Naive thymus-derived CD4-positive, alpha-beta T cell (primary cell): ENCODE measurements at regions of chr11 and their contacts with region 1.

Region 1: DNA sequence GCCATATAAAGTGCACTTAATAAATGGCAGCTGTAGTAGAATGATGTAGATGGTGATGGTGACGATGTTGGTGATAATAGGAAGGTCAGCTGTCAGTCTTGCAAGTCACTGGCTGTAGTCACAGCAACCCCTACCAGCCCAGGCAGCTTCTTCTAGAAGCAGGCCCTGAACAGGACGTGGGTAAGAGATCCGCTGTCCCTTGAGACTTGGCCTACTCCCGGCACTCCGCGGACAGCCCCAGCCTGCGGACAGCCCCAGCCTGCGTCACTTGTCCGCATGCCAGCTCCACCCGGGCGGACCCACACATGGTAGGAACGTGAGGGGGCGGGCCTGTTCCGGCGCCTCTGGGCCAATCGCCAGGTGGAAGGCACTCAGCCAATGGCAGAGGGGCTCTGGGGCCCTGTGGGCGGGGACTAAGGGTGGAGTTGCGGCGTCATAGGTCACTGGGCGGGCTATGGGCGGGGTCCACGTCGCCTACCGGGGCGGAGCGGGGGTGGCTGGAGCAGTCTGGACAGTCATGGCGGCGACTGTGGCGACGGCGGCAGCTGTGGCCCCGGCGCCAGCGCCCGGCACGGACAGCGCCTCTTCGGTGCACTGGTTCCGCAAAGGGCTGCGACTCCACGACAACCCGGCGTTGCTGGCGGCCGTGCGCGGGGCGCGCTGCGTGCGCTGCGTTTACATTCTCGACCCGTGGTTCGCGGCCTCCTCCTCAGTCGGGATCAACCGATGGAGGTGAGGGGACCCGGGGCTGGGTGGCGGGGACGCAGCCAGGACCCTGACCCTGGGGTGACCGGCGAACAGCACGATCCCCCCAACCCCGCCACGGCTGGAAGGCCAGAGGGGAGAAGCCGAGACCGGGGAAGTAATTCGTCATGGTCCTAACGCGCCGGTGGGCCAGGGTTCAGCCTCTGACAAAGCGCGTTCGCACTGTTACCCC is at the start of gene CRY2:
- DNase-seq: peak; percentile 94 to 98 (median 97)
- ATAC-seq: peak; percentile 90
- H3K4me3 ChIP-seq: peak within 1 kb of the TSS; percentile 85
- H3K4me3 Mint-ChIP-seq: peak within 1 kb of the TSS; percentile 78 to 96 (median 90)
- H3K27ac ChIP-seq: peak within 1 kb of the TSS; percentile 91
- H3K27ac Mint-ChIP-seq: peak within 1 kb of the TSS; percentile 89 to 99 (median 96)
- H3K4me1 ChIP-seq: peaks cover 21 to 34% of the 10 kb centered on the region in 2 donors
- H3K4me1 Mint-ChIP-seq: peaks cover 40 to 68% (median 54%) of the 10 kb centered on the region in 7 donors
- H3K27me3 ChIP-seq: no peaks in the 10 kb centered on the region
- H3K27me3 Mint-ChIP-seq: peaks cover 0 to 20% (median 0%) of the 10 kb centered on the region in 5 donors
- total RNA-seq, gene CRY2: 31.1 to 202 (median 66.9) TPM

Region 2: DNA sequence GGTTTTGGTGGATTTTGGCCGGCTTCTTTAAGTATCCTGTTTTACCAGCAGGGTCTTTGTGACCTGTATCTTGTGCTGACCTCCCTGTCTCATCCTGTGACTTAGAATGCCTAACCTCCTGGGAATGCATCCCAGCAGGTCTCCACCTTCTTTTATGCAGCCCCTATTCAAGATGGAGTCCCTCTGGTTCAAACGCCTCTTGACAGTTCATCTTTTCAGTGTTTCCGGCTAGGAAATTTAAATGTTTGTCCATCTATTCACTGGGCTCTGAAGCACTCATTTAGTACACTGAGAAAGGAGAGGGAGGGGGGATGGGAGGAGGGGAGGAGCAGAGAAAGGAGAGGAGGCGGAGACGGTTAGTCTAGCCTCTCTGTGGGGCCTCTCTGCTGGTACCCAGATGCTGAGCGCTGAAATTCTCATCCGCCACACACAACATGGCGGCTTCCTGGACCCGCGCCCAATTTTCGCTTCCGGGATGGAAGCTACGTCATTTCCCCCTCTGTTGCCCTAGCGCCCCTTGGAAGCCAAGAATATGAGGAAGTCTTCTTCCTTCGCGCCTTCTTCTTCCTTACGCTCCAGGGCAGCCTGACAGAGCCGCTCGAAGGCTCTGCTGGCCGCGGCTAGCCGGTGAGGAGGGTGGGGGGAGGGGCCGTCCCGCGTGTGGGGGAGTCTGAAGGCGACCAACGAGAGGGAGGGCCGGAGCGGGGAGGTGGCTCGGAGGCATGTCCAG is 492.1 kb before region 1 on chr11:
- CTCF ChIA-PET with region 1: no interaction called
- POLR2A ChIA-PET with region 1: no interaction called
- intact Hi-C with region 1: loop called in 1 of 2 experiments (anchors 10 kb)
- DNase-seq: peak; percentile 77 to 91 (median 88)
- ATAC-seq: peak; percentile 96
- H3K4me3 ChIP-seq: peak overlapping the region; percentile 93
- H3K4me3 Mint-ChIP-seq: peak overlapping the region; percentile 75 to 87 (median 82)
- H3K27ac ChIP-seq: peak overlapping the region; percentile 73
- H3K27ac Mint-ChIP-seq: peak overlapping the region; percentile 70 to 91 (median 83)
- H3K4me1 ChIP-seq: peaks cover 0 to 5% of the 10 kb centered on the region in 2 donors
- H3K4me1 Mint-ChIP-seq: peaks cover 9 to 31% (median 26%) of the 10 kb centered on the region in 7 donors
- H3K27me3 ChIP-seq: no peaks in the 10 kb centered on the region
- H3K27me3 Mint-ChIP-seq: peaks cover 0 to 28% (median 7%) of the 10 kb centered on the region in 5 donors

Region 3: DNA sequence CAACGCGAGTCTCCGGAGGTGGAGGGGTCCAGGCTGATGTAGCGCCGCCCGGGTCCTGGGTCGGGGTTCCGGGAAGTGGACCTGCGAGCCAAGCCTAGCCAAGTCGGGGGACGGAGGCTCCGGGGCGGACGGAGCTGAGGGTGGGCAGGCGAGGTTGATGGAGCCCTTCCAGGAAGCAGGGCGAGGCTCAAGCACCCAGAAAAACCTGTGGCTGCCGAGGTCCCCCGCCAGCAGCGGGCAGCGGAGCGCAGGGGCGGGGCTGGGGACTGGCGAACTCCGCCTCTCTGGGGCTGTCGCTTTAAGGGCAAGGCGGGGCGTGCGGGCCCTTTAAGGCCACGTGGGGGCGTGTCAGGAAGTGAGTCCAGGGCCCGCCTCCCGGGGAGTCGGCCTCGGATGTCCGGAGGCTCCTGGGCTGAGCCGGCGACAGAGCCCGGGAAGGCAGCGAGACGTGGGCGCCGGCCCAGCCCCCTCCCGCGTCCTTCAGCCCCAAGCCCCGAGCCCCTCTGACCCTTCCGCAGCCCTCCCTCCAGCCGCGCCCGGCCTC is 42.4 kb before region 1 on chr11 and contains the start of gene SLC35C1:
- CTCF ChIA-PET with region 1: interaction called, 7 read pairs
- POLR2A ChIA-PET with region 1: interaction called, 6 read pairs
- intact Hi-C with region 1: loop called (anchors 1 kb)
- DNase-seq: peak; percentile 89 to 97 (median 93)
- ATAC-seq: peak; percentile 99
- H3K4me3 ChIP-seq: peak within 1 kb of the TSS; percentile 95
- H3K4me3 Mint-ChIP-seq: peak within 1 kb of the TSS; percentile 86 to 99 (median 92)
- H3K27ac ChIP-seq: peak within 1 kb of the TSS; percentile 87
- H3K27ac Mint-ChIP-seq: peak within 1 kb of the TSS; percentile 61 to 94 (median 91)
- H3K4me1 ChIP-seq: peaks cover 27 to 29% of the 10 kb centered on the region in 2 donors
- H3K4me1 Mint-ChIP-seq: peaks cover 31 to 43% (median 40%) of the 10 kb centered on the region in 7 donors
- H3K27me3 ChIP-seq: no peaks in the 10 kb centered on the region
- H3K27me3 Mint-ChIP-seq: no peaks in the 10 kb centered on the region
- total RNA-seq, gene SLC35C1: 7.9 to 22.8 (median 14.2) TPM

Region 4: GRCh38 chr11:45885274-45885920 is 38.2 kb after region 1 on chr11 and contains the start of gene MAPK8IP1:
- CTCF ChIA-PET with region 1: no interaction called
- POLR2A ChIA-PET with region 1: no interaction called
- intact Hi-C with region 1: loop called (anchors 1 kb)
- DNase-seq: peak; percentile 15 to 71 (median 50)
- ATAC-seq: peak; percentile 90
- H3K4me3 ChIP-seq: peak within 1 kb of the TSS; percentile 51
- H3K4me3 Mint-ChIP-seq: peak within 1 kb of the TSS; percentile 64 to 85 (median 73)
- H3K27ac ChIP-seq: no peak within 1 kb of the TSS
- H3K27ac Mint-ChIP-seq: peak within 1 kb of the TSS in 2 of 9 donors; percentile 40 to 69
- H3K4me1 ChIP-seq: no peaks in the 10 kb centered on the region
- H3K4me1 Mint-ChIP-seq: peaks cover 7 to 15% (median 10%) of the 10 kb centered on the region in 7 donors
- H3K27me3 ChIP-seq: no peaks in the 10 kb centered on the region
- H3K27me3 Mint-ChIP-seq: peaks cover 0 to 21% (median 4%) of the 10 kb centered on the region in 5 donors
- total RNA-seq, gene MAPK8IP1: 0.65 to 7.0 (median 0.92) TPM

Region 5: DNA sequence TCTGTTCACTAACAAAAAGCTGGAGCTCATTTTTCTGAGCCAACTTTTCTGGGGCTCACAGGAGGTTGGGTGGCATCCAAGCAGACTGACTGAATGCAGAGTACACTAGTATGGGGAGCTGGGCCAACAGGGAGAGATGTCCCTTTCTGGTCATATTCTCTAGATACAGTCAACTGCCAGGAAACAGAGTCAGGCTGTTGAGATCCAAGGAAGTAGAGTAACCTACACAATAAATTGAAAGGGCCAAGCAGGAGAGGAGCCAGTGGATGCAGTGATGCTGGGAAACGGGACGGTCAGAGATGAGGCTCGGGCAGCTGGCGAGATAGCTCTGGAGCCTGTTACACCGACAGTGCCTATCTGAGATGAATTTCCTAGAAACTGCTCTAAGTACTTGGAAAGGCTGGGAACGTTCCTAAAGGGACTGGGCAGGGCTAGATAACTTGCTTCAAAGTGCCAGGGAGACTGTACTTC is 146.3 kb after region 1 on chr11:
- CTCF ChIA-PET with region 1: no interaction called
- POLR2A ChIA-PET with region 1: no interaction called
- intact Hi-C with region 1: no loop called
- DNase-seq: no peak
- ATAC-seq: no peak
- H3K4me3 ChIP-seq: no peak overlapping the region
- H3K4me3 Mint-ChIP-seq: no peak overlapping the region
- H3K27ac ChIP-seq: no peak overlapping the region
- H3K27ac Mint-ChIP-seq: no peak overlapping the region
- H3K4me1 ChIP-seq: no peaks in the 10 kb centered on the region
- H3K4me1 Mint-ChIP-seq: peaks cover 2 to 20% (median 8%) of the 10 kb centered on the region in 7 donors
- H3K27me3 ChIP-seq: no peaks in the 10 kb centered on the region
- H3K27me3 Mint-ChIP-seq: no peaks in the 10 kb centered on the region

Region 6: GRCh38 chr11:46006418-46007070 is 159.3 kb after region 1 on chr11:
- CTCF ChIA-PET with region 1: interaction called, 20 read pairs
- POLR2A ChIA-PET with region 1: interaction called, 3 read pairs
- intact Hi-C with region 1: loop called (anchors 1 kb)
- DNase-seq: peak in 7 of 9 donors; percentile 18 to 65 (median 53)
- ATAC-seq: peak; percentile 86
- H3K4me3 ChIP-seq: no peak overlapping the region
- H3K4me3 Mint-ChIP-seq: no peak overlapping the region
- H3K27ac ChIP-seq: no peak overlapping the region
- H3K27ac Mint-ChIP-seq: peak overlapping the region in 2 of 9 donors; percentile 2 to 41
- H3K4me1 ChIP-seq: no peaks in the 10 kb centered on the region
- H3K4me1 Mint-ChIP-seq: peaks cover under 1 to 8% (median 4%) of the 10 kb centered on the region in 7 donors
- H3K27me3 ChIP-seq: no peaks in the 10 kb centered on the region
- H3K27me3 Mint-ChIP-seq: no peaks in the 10 kb centered on the region

Region 7: DNA sequence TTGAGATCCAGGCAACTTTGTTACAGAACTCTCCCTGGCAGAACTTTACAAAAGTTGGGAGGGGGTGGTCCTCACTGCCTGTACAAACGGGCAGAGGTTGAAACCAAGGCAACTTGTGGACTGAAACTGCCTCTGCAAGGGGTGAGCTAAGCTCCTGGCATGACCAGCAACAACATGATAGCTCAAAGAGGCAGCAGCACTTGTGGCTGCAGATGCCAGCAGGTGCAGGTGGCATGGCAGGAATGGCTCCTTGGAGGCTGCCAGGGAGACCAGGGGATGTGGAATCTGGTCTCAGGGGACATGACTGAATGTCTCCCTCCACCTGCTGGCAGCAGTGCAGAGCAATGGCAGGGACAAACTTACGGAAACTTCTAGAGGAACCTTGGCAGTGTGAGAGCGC is 312.9 kb after region 1 on chr11:
- CTCF ChIA-PET with region 1: no interaction called
- POLR2A ChIA-PET with region 1: no interaction called
- intact Hi-C with region 1: no loop called
- DNase-seq: no peak
- ATAC-seq: no peak
- H3K4me3 ChIP-seq: no peak overlapping the region
- H3K4me3 Mint-ChIP-seq: no peak overlapping the region
- H3K27ac ChIP-seq: no peak overlapping the region
- H3K27ac Mint-ChIP-seq: no peak overlapping the region
- H3K4me1 ChIP-seq: no peaks in the 10 kb centered on the region
- H3K4me1 Mint-ChIP-seq: no peaks in the 10 kb centered on the region
- H3K27me3 ChIP-seq: peaks cover 0 to 3% of the 10 kb centered on the region in 2 donors
- H3K27me3 Mint-ChIP-seq: peaks cover 34 to 40% (median 39%) of the 10 kb centered on the region in 5 donors

Region 8: DNA sequence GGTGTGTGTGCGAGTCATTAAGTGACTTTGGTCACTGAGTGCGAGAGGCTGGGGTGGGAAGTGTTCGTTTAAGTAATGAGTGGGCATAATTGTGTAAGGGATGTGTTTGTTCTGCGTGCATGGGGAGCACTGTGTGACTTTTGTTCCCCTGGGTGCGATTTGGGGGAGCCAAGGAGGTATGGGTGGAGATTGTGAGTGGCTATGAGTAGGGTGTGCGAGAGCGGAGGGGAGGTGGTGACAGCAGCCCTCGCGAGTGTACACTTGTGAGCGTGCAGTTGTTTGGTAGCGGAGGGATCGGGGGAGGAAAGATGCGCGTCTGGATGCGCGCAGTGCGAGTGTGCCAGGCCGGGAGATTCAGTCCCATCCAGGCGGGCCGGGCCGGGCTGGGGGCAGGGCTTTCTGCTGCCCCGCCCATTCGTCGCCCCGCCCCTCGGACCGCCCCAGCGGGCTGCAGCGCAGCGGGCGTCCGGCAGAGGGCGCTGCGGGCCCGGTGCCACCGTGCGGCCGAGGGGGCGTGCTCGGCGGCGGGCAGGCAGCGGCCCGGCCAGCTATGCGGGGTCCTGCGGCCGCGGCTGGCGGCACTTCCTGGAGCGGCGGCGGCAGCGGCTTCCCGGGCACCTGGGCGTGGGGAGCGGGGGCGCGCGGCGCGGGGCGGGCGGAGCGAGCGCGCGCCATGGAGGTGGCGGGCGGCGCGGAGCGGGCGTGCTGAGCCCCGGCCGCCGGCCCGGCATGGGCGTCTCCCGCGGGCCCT is 499.8 kb after region 1 on chr11 and contains the start of gene DGKZ:
- CTCF ChIA-PET with region 1: no interaction called
- POLR2A ChIA-PET with region 1: no interaction called
- intact Hi-C with region 1: loop called in 1 of 2 experiments (anchors 2 kb)
- DNase-seq: peak; percentile 85 to 100 (median 96)
- ATAC-seq: peak; percentile 92
- H3K4me3 ChIP-seq: peak within 1 kb of the TSS; percentile 91
- H3K4me3 Mint-ChIP-seq: peak within 1 kb of the TSS; percentile 93 to 97 (median 95)
- H3K27ac ChIP-seq: peak within 1 kb of the TSS; percentile 83
- H3K27ac Mint-ChIP-seq: peak within 1 kb of the TSS; percentile 89 to 98 (median 94)
- H3K4me1 ChIP-seq: peaks cover 46 to 79% of the 10 kb centered on the region in 2 donors
- H3K4me1 Mint-ChIP-seq: peaks cover 61 to 85% (median 75%) of the 10 kb centered on the region in 7 donors
- H3K27me3 ChIP-seq: no peaks in the 10 kb centered on the region
- H3K27me3 Mint-ChIP-seq: peaks cover 0 to 3% (median 0%) of the 10 kb centered on the region in 5 donors
- total RNA-seq, gene DGKZ: 146 to 291 (median 263) TPM